PC-3 (cell line): ENCODE measurements at regions of chr1 and their contacts with region 1.

Region 1: GRCh38 chr1:216325946-216326345 is 97.3 kb downstream of the USH2A start:
- DNase-seq: peak; percentile 98
- ATAC-seq: peak; percentile 90
- H3K4me3 ChIP-seq: no peak overlapping the region
- H3K27ac ChIP-seq: peak overlapping the region; percentile 49
- H3K4me1 ChIP-seq: peaks cover 24% of the 10 kb centered on the region
- H3K27me3 ChIP-seq: no peaks in the 10 kb centered on the region
- CTCF ChIP-seq: no peak

Region 2: GRCh38 chr1:216123446-216124191 is 202.3 kb before region 1 on chr1:
- CTCF ChIA-PET with region 1: no interaction called
- POLR2A ChIA-PET with region 1: no interaction called
- intact Hi-C with region 1: no loop called
- DNase-seq: no peak
- ATAC-seq: no peak
- H3K4me3 ChIP-seq: no peak overlapping the region
- H3K27ac ChIP-seq: no peak overlapping the region
- H3K4me1 ChIP-seq: no peaks in the 10 kb centered on the region
- H3K27me3 ChIP-seq: peaks cover 61% of the 10 kb centered on the region
- CTCF ChIP-seq: no peak

Region 3: DNA sequence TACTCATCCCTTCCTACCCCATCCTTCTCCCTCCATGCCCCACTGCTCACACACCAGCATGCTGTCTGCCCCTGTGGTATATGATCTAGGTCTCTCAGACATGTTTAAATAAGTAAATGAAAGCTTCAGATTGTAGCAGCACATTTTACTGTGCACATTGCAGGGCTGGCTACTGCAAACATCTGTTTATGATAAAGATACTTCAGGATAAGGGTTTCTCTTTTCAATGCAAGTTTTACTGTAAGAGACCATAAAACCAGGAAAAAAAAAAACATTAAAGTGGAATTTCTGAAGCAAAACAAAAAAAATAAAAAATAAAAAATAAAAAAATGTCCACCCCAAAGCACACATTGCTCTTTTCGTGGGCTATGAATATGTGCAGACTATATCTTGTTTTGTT is 87.1 kb before region 1 on chr1:
- CTCF ChIA-PET with region 1: no interaction called
- POLR2A ChIA-PET with region 1: no interaction called
- intact Hi-C with region 1: loop called (anchors 5 kb)
- DNase-seq: no peak
- ATAC-seq: no peak
- H3K4me3 ChIP-seq: no peak overlapping the region
- H3K27ac ChIP-seq: no peak overlapping the region
- H3K4me1 ChIP-seq: peaks cover 14% of the 10 kb centered on the region
- H3K27me3 ChIP-seq: peaks cover 10% of the 10 kb centered on the region; the same call in 1 of the 2 replicates
- CTCF ChIP-seq: no peak

Region 4: GRCh38 chr1:216281757-216282156 is 44.2 kb before region 1 on chr1:
- CTCF ChIA-PET with region 1: no interaction called
- POLR2A ChIA-PET with region 1: no interaction called
- intact Hi-C with region 1: loop called (anchors 2 kb)
- DNase-seq: peak; percentile 53
- ATAC-seq: peak; percentile 87
- H3K4me3 ChIP-seq: no peak overlapping the region
- H3K27ac ChIP-seq: no peak overlapping the region
- H3K4me1 ChIP-seq: peaks cover 7% of the 10 kb centered on the region
- H3K27me3 ChIP-seq: no peaks in the 10 kb centered on the region
- CTCF ChIP-seq: no peak

Region 5: GRCh38 chr1:216310776-216311175 is 15.2 kb before region 1 on chr1:
- CTCF ChIA-PET with region 1: no interaction called
- POLR2A ChIA-PET with region 1: no interaction called
- intact Hi-C with region 1: loop called (anchors 1 kb)
- DNase-seq: peak; percentile 86
- ATAC-seq: peak; percentile 63
- H3K4me3 ChIP-seq: no peak overlapping the region
- H3K27ac ChIP-seq: no peak overlapping the region
- H3K4me1 ChIP-seq: peaks cover 16% of the 10 kb centered on the region
- H3K27me3 ChIP-seq: no peaks in the 10 kb centered on the region
- CTCF ChIP-seq: peak; percentile 99

Region 6: DNA sequence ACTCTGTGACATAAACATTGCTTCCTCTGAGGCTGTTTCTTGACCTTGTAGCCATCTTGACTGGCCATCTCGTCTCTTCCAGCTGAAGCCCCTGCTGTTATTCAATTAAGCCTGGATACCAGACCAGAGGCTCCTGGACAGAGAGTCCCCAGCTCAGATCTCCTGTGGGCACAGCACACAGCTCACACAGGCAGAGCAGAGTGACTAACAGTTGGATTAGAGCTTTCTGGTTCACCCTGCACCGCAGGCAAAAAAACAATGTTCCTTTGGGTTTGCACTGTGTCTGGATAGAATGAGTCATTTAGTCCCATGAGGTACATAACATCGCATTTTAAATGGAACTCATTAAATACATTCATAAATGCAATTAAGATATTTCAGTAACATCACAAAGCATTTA is 130.7 kb after region 1 on chr1:
- CTCF ChIA-PET with region 1: no interaction called
- POLR2A ChIA-PET with region 1: no interaction called
- intact Hi-C with region 1: loop called (anchors 2 kb)
- DNase-seq: peak; percentile 97
- ATAC-seq: peak; percentile 95
- H3K4me3 ChIP-seq: no peak overlapping the region
- H3K27ac ChIP-seq: peak overlapping the region; percentile 24
- H3K4me1 ChIP-seq: peaks cover 44% of the 10 kb centered on the region
- H3K27me3 ChIP-seq: no peaks in the 10 kb centered on the region
- CTCF ChIP-seq: no peak

Region 7: DNA sequence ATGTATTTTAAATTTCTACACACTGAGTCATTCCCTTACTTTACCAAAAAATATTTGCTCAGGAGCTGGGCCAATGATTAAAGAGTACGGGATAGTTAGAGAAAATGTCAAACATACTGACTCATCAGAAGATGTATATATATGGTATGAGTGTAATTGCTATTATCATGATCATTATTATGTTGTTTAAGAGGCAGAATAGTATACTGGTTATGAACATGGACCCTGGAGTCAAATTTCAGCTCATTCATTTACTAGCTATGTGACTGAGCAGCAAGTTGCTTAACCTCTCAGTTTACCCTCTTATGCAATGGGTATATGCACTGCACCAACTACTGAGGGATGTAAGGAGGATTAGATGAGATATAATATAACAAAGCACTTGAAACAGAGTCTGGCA is 138.5 kb after region 1 on chr1:
- CTCF ChIA-PET with region 1: no interaction called
- POLR2A ChIA-PET with region 1: no interaction called
- intact Hi-C with region 1: loop called (anchors 1 kb)
- DNase-seq: peak; percentile 99
- ATAC-seq: peak; percentile 97
- H3K4me3 ChIP-seq: no peak overlapping the region
- H3K27ac ChIP-seq: no peak overlapping the region
- H3K4me1 ChIP-seq: peaks cover 43% of the 10 kb centered on the region
- H3K27me3 ChIP-seq: no peaks in the 10 kb centered on the region
- CTCF ChIP-seq: no peak